Caco-2 (cell line): ENCODE measurements at regions of chr13 and their contacts with region 1.

Region 1: GRCh38 chr13:100646030-100646673 is 28.4 kb downstream of the TMTC4 start:
- DNase-seq: peak in 1 of 2 experiments; percentile 49
- H3K4me3 ChIP-seq: no peak overlapping the region
- H3K4me3 Mint-ChIP-seq: no peak overlapping the region
- H3K27ac Mint-ChIP-seq: no peak overlapping the region
- H3K4me1 ChIP-seq: no peaks in the 10 kb centered on the region
- H3K4me1 Mint-ChIP-seq: no peaks in the 10 kb centered on the region
- H3K27me3 ChIP-seq: no peaks in the 10 kb centered on the region
- H3K27me3 Mint-ChIP-seq: no peaks in the 10 kb centered on the region
- CTCF ChIP-seq: peak; percentile 71 to 76

Region 2: DNA sequence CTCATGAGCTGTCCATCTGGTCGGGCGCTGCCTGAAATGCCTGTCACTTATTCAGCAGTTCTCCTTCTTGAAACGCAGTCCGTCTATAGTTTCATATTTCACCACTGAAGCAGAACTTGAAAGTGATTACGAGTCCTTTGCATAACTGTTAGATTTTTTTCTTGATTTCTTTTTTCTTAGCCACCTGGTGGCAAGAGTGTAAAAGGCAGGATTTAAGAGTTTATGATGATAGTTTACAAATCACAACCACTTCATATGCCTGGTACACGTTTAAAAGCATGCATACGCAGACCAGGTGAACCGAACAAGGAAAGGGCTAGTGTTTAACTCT is 103.4 kb before region 1 on chr13:
- CTCF ChIA-PET with region 1: no interaction called
- POLR2A ChIA-PET with region 1: no interaction called
- intact Hi-C with region 1: no loop called
- DNase-seq: no peak
- H3K4me3 ChIP-seq: no peak overlapping the region
- H3K4me3 Mint-ChIP-seq: no peak overlapping the region
- H3K27ac Mint-ChIP-seq: no peak overlapping the region
- H3K4me1 ChIP-seq: no peaks in the 10 kb centered on the region
- H3K4me1 Mint-ChIP-seq: no peaks in the 10 kb centered on the region
- H3K27me3 ChIP-seq: no peaks in the 10 kb centered on the region
- H3K27me3 Mint-ChIP-seq: no peaks in the 10 kb centered on the region
- CTCF ChIP-seq: peak; percentile 45 to 61

Region 3: GRCh38 chr13:100828226-100828625 is 182.1 kb after region 1 on chr13:
- CTCF ChIA-PET with region 1: no interaction called
- POLR2A ChIA-PET with region 1: no interaction called
- intact Hi-C with region 1: loop called (anchors 1 kb)
- DNase-seq: peak; percentile 23 to 41
- H3K4me3 ChIP-seq: no peak overlapping the region
- H3K4me3 Mint-ChIP-seq: no peak overlapping the region
- H3K27ac Mint-ChIP-seq: no peak overlapping the region
- H3K4me1 ChIP-seq: no peaks in the 10 kb centered on the region
- H3K4me1 Mint-ChIP-seq: peaks cover 7% of the 10 kb centered on the region
- H3K27me3 ChIP-seq: no peaks in the 10 kb centered on the region
- H3K27me3 Mint-ChIP-seq: no peaks in the 10 kb centered on the region
- CTCF ChIP-seq: peak; percentile 30 to 57

Region 4: DNA sequence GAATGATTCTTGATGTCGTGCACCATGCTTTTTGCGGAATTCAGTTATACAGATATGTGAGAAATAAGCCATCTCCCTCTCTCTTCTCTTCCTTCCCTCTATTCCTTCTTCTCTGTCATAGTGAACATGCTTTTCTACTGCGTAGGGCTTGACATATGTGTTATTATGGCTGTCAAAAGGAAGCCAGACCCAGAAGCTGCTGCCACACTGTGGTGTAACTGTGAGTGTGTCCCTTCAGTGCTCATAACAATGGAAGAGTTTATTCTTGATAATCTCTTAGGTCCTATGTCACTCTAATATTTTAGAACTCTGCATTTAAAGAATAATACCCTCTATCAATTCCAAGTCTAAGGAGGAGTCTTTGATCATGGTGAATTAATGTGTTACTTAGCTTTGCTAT is 237.3 kb after region 1 on chr13:
- CTCF ChIA-PET with region 1: no interaction called
- POLR2A ChIA-PET with region 1: no interaction called
- intact Hi-C with region 1: loop called (anchors 1 kb)
- DNase-seq: peak in 1 of 2 experiments; percentile 8
- H3K4me3 ChIP-seq: no peak overlapping the region
- H3K4me3 Mint-ChIP-seq: no peak overlapping the region
- H3K27ac Mint-ChIP-seq: no peak overlapping the region
- H3K4me1 ChIP-seq: no peaks in the 10 kb centered on the region
- H3K4me1 Mint-ChIP-seq: no peaks in the 10 kb centered on the region
- H3K27me3 ChIP-seq: no peaks in the 10 kb centered on the region
- H3K27me3 Mint-ChIP-seq: no peaks in the 10 kb centered on the region
- CTCF ChIP-seq: peak; percentile 19 to 44

Region 5: GRCh38 chr13:100987953-100988352 is 341.8 kb after region 1 on chr13:
- CTCF ChIA-PET with region 1: no interaction called
- POLR2A ChIA-PET with region 1: no interaction called
- intact Hi-C with region 1: loop called (anchors 1 kb)
- DNase-seq: peak in 1 of 2 experiments; percentile 12
- H3K4me3 ChIP-seq: no peak overlapping the region
- H3K4me3 Mint-ChIP-seq: no peak overlapping the region
- H3K27ac Mint-ChIP-seq: no peak overlapping the region
- H3K4me1 ChIP-seq: no peaks in the 10 kb centered on the region
- H3K4me1 Mint-ChIP-seq: no peaks in the 10 kb centered on the region
- H3K27me3 ChIP-seq: no peaks in the 10 kb centered on the region
- H3K27me3 Mint-ChIP-seq: no peaks in the 10 kb centered on the region
- CTCF ChIP-seq: peak in 1 of 2 experiments; percentile 4

Region 6: DNA sequence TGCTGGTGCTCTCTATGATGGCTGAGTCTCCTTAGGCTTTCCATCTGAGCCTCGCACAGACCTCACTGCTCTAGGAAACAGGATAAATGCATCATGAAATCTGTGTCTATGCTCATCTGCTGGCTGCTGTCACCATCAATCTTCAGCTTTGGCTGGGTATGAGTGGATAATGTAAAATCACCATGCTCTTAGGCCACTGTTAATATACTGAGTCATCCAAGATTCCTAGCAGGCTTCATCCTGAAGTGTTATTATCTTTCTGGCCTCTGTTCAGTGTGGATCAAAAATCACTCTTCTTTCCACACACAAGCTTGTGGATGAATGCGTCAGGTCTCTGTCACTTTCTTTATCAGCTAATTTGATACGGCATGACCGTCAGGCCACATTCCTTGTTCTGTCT is 452.7 kb after region 1 on chr13:
- CTCF ChIA-PET with region 1: no interaction called
- POLR2A ChIA-PET with region 1: no interaction called
- intact Hi-C with region 1: loop called (anchors 1 kb)
- DNase-seq: no peak
- H3K4me3 ChIP-seq: no peak overlapping the region
- H3K4me3 Mint-ChIP-seq: no peak overlapping the region
- H3K27ac Mint-ChIP-seq: no peak overlapping the region
- H3K4me1 ChIP-seq: no peaks in the 10 kb centered on the region
- H3K4me1 Mint-ChIP-seq: no peaks in the 10 kb centered on the region
- H3K27me3 ChIP-seq: no peaks in the 10 kb centered on the region
- H3K27me3 Mint-ChIP-seq: peaks cover 7% of the 10 kb centered on the region
- CTCF ChIP-seq: no peak

Region 7: DNA sequence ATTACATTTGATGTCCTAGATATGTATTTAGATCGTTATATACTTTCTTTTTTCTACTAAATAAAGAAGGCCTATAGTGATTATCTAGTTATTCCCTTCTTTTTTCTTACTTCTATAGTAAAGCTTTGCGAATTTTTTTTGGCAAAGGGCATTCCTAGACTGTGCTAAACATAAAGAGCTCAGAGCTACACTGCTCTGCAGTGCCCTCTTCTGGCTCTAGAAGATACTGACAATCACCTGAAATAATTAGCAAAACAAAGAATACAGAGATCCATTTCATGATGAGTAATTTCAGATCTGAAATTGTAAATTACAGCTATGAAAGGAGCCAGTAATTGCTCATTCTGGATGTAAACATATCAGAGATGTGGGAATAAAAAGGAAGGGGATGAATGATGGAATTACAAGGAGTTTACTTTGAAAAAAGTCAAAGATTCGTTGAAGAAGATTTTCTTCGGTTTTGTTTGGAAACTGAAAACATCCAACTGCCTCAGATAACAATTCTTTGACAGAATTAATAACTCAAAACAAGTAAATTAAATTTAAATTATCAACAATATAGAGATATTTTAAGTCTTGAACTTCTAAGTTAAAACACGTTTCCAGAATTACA is 481.7 kb after region 1 on chr13:
- CTCF ChIA-PET with region 1: no interaction called
- POLR2A ChIA-PET with region 1: no interaction called
- intact Hi-C with region 1: loop called (anchors 2 kb)
- DNase-seq: peak in 1 of 2 experiments; percentile 23
- H3K4me3 ChIP-seq: no peak overlapping the region
- H3K4me3 Mint-ChIP-seq: no peak overlapping the region
- H3K27ac Mint-ChIP-seq: no peak overlapping the region
- H3K4me1 ChIP-seq: no peaks in the 10 kb centered on the region
- H3K4me1 Mint-ChIP-seq: no peaks in the 10 kb centered on the region
- H3K27me3 ChIP-seq: no peaks in the 10 kb centered on the region; the same call in 1 of the 2 replicates
- H3K27me3 Mint-ChIP-seq: peaks cover 19% of the 10 kb centered on the region
- CTCF ChIP-seq: peak; percentile 56 to 85